Left cardiac atrium (tissue), 4 donors: ENCODE measurements at regions of chr3 and their contacts with region 1.

Region 1: DNA sequence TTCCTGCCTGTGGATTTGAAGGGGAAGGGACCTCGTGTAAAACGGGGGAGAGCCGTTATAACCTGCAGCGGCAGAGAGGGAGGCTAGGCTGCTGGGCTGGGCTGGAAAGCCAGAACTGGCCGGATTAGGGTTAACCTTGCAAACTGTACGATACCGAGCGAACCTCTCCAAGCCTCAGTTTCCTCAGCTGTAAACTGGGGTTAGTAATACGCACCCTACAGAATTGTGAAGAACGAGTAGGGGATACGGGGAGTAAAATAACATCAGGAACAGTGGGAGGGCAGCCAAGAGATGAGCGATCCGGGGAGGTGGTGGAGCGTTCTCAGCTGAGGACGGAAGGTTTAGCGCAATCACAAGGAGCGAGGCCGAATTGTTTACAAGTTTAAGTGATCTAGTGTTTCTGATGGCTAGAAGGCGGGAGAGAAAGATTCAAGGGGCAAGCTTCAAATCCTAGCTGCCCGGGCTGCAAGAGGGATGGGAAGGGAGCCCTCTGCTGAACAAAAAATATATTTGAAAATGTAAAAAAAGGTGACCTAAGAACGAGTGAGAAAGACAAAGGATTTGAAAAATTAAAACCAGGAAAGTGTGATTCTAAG is 768 bp upstream of the SEMA5B start:
- DNase-seq: peak; percentile 24
- ATAC-seq: peak; percentile 51 to 60

Region 2: GRCh38 chr3:122993124-122993978 is 35.0 kb before region 1 on chr3:
- intact Hi-C with region 1: loop called in 1 of 2 experiments (anchors 5 kb)
- DNase-seq: peak; percentile 47
- ATAC-seq: peak; percentile 58 to 62

Region 3: DNA sequence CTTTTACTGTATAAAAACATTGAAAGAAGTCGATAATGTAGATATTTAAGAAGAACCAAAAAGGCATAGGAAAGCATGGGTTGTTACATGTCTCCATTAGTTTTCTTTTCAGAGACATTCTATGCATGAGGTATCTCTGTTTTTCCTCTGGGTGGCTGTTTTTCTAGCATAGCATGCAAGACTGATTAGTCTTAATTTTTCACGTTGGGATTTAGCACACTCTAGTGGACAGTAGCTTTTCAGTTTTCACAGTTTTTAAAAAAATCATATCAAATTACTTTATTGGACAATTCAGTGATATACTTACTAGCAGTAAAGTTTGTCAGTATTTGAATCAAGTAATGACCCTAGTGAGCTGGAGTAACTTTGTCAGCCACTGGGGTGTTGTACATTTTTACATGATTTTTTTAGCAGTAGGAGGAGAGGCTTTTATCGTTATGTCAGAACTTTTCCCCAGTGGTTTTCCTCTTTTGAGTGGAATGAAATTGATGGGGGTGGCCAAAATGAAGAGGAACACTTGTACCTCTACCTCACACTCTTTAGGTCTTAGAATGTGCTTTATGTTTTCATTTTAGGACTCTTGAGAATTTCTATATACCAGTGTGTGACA is 230.6 kb after region 1 on chr3:
- intact Hi-C with region 1: loop called in 1 of 2 experiments (anchors 10 kb)
- DNase-seq: no peak
- ATAC-seq: peak; percentile 70 to 80

Region 4: GRCh38 chr3:123344175-123344906 is 316.0 kb after region 1 on chr3:
- intact Hi-C with region 1: no loop called
- DNase-seq: no peak
- ATAC-seq: peak; percentile 15 to 53